Activated CD4-positive, alpha-beta T cell treated with anti-CD3 and anti-CD28 coated beads, Interleukin-2, amount 10 ng/mL, durations not matched to agents 24 days and 14 days (primary cell): ENCODE measurements at regions of chr9 and their contacts with region 1.

Region 1: GRCh38 chr9:74277532-74277931 is 219.6 kb upstream of the RORB start:
- DNase-seq: peak; percentile 87
- H3K4me3 Mint-ChIP-seq: peak overlapping the region; percentile 18
- H3K27ac Mint-ChIP-seq: peak overlapping the region; percentile 73
- H3K4me1 Mint-ChIP-seq: peaks cover 18% of the 10 kb centered on the region
- H3K27me3 Mint-ChIP-seq: no peaks in the 10 kb centered on the region

Region 2: DNA sequence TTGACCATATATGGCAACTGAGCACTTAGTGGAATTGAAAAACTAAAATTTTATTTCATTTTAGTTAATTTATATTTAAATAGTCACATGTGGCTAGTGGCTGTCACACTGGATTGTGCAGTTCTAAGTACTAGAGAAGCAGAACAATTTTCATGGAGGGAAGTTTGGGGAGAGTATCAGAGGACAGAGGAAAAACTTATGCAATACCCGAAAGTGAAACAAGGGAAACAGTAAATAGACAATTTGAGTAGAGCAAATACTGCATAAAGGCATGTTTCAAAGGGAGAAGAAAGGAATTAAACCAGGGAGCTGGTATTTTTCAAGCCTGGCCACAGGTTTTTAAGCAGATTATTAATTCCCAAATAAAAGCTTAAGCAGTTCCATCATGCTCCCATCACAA is 370.9 kb before region 1 on chr9:
- intact Hi-C with region 1: no loop called
- DNase-seq: no peak
- H3K4me3 Mint-ChIP-seq: no peak overlapping the region
- H3K27ac Mint-ChIP-seq: no peak overlapping the region
- H3K4me1 Mint-ChIP-seq: no peaks in the 10 kb centered on the region
- H3K27me3 Mint-ChIP-seq: no peaks in the 10 kb centered on the region

Region 3: GRCh38 chr9:74245866-74246497 is 31.6 kb before region 1 on chr9:
- intact Hi-C with region 1: loop called (anchors 1 kb)
- DNase-seq: peak; percentile 71
- H3K4me3 Mint-ChIP-seq: peak overlapping the region; percentile 27
- H3K27ac Mint-ChIP-seq: peak overlapping the region; percentile 82
- H3K4me1 Mint-ChIP-seq: peaks cover 9% of the 10 kb centered on the region
- H3K27me3 Mint-ChIP-seq: no peaks in the 10 kb centered on the region

Region 4: DNA sequence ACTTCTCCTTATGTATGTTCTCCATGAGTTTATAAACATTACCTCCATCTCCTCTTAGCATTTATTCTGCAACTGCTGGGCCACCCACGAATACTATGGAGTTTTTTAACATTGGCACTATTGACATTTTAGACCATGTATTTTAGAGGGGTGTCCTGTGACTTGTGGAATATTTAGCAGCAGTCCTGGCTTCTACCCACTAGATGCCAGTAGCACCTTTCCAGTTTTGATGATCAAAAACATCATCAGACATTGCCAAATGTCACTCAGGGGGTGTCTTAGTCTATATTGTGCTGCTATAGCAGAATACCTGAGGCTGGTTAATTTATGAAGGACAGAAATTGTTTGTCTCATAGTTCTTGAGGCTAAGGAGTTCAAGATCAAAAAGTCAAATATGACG is 32.1 kb after region 1 on chr9:
- intact Hi-C with region 1: loop called (anchors 1 kb)
- DNase-seq: no peak
- H3K4me3 Mint-ChIP-seq: no peak overlapping the region
- H3K27ac Mint-ChIP-seq: no peak overlapping the region
- H3K4me1 Mint-ChIP-seq: no peaks in the 10 kb centered on the region
- H3K27me3 Mint-ChIP-seq: no peaks in the 10 kb centered on the region